Sigmoid colon (tissue), 7 donors: ENCODE measurements at regions of chr6 and their contacts with region 1.

Region 1: GRCh38 chr6:26025894-26026832 is 61.1 kb upstream of the HFE start:
- DNase-seq: peak; percentile 99
- H3K4me3 ChIP-seq: peak overlapping the region; percentile 53 to 76 (median 61)
- H3K27ac ChIP-seq: peak overlapping the region; percentile 90 to 99 (median 95)
- H3K4me1 ChIP-seq: peaks cover 0 to 31% (median 19%) of the 10 kb centered on the region in 4 donors
- H3K27me3 ChIP-seq: no peaks in the 10 kb centered on the region
- CTCF ChIP-seq: peak in 3 of 4 experiments; percentile 75 to 93 (median 77)
- EP300 ChIP-seq: peak in 2 of 4 donors; percentile 62 to 73
- POLR2A ChIP-seq: peak; percentile 46 to 53

Region 2: DNA sequence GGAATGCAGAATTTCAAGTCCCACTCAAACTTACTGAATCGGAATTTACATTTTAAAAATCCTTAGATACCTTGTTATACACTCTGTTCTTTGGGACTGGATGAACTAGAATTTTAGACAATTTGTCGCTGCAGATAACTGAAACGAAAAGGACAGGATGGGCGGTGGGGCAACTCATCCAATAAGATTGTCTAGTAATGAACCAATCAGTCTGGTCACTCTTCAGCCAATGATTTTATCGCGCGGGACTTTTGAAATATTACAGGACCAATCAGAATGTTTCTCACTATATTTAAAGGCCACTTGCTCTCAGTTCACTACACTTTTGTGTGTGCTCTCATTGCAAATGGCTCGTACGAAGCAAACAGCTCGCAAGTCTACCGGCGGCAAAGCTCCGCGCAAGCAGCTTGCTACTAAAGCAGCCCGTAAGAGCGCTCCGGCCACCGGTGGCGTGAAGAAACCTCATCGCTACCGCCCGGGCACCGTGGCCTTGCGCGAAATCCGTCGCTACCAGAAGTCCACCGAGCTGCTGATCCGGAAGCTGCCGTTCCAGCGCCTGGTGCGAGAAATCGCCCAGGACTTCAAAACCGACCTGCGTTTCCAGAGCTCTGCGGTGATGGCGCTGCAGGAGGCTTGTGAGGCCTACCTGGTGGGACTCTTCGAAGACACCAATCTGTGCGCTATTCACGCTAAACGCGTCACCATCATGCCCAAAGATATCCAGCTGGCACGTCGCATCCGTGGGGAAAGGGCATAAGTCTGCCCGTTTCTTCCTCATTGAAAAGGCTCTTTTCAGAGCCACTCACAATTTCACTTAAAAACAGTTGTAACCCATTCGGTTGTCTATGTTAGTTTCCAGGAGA is 19.1 kb after region 1 on chr6:
- intact Hi-C with region 1: loop called (anchors 2 kb)
- DNase-seq: peak; percentile 94
- H3K4me3 ChIP-seq: peak overlapping the region; percentile 41 to 56 (median 54)
- H3K27ac ChIP-seq: peak overlapping the region; percentile 94 to 98 (median 98)
- H3K4me1 ChIP-seq: peaks cover 0 to 20% (median 15%) of the 10 kb centered on the region in 4 donors
- H3K27me3 ChIP-seq: no peaks in the 10 kb centered on the region
- CTCF ChIP-seq: no peak
- EP300 ChIP-seq: no peak
- POLR2A ChIP-seq: peak; percentile 91 to 93

Region 3: DNA sequence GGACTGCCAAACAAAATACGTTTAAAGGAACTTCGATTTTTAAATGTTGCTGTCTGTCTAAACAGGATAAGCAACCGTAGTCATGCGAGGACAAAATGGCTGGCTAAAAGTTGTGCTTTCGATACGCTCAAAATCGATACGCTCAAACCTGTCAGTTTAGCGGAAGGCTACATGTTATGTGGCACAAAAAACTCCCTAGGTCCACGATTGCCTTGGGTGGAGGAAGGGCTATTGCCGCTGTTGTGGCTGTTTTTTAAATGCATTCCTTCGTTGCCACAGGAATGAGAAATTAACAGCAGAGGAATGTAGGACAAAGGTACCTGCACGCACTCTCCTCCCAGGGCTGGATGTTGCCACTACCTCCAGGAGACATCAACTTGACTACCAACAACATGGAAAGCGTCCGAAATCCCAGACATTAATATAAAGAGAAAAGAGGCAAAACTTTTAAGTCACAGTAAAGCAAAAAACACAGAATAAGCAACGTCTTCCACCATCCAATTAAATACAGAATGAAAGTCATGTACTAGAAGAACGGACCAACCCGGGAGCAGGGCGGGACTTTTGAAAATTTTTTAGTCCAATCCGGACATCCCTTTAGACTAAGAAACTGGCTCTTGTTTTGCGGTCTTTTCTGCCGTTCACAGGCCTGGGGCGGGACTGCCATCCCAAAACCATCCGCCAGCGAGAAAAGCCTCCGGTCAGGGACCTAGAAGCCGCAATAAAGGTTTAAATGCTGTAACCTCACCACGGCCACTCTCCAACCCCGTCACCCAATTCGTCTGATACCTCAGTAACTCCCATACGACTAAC is 28.9 kb after region 1 on chr6:
- intact Hi-C with region 1: loop called (anchors 1 kb)
- DNase-seq: peak; percentile 97
- H3K4me3 ChIP-seq: peak overlapping the region; percentile 59 to 83 (median 78)
- H3K27ac ChIP-seq: peak overlapping the region; percentile 88 to 99 (median 97)
- H3K4me1 ChIP-seq: peaks cover 2 to 15% (median 7%) of the 10 kb centered on the region in 4 donors
- H3K27me3 ChIP-seq: no peaks in the 10 kb centered on the region
- CTCF ChIP-seq: peak in 3 of 4 experiments; percentile 12 to 39 (median 34)
- EP300 ChIP-seq: no peak
- POLR2A ChIP-seq: peak; percentile 72 to 74

Region 4: DNA sequence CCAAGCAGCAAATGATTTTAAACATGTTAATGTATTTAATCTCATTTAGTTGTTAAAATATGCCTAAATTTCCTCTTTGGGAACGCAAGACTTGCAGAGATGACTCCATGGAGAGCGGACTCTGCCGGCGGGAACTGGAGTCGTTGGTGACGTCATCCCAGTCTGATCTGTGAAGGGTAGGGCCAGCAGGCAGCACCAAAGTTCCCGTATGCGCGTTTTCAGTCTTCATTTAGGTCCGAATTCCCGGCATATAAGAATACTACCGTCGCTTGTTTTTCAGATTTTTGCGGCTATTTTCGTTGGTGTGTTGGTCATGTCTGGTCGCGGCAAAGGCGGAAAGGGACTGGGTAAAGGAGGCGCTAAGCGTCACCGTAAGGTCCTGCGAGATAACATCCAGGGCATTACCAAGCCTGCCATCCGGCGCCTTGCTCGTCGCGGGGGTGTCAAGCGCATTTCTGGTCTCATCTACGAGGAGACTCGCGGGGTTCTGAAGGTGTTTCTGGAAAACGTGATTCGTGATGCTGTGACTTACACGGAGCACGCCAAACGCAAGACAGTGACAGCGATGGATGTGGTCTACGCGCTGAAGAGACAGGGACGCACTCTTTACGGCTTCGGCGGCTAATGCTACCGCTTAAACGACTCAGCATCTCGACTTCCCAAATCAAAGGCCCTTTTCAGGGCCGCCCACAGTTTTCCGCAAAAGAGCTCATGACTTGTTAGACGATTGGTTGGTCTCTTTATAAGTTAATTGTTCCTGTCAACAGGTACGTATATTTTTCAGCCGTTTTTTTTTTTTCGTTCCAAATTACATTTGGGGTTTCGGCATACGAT is 178.4 kb after region 1 on chr6:
- intact Hi-C with region 1: loop called (anchors 5 kb)
- DNase-seq: peak; percentile 99
- H3K4me3 ChIP-seq: peak overlapping the region; percentile 61 to 75 (median 65)
- H3K27ac ChIP-seq: peak overlapping the region; percentile 95 to 98 (median 98)
- H3K4me1 ChIP-seq: peaks cover 0 to 29% (median 16%) of the 10 kb centered on the region in 4 donors
- H3K27me3 ChIP-seq: no peaks in the 10 kb centered on the region
- CTCF ChIP-seq: peak in 2 of 4 experiments; percentile 8 to 34
- EP300 ChIP-seq: peak in 3 of 4 donors; percentile 67 to 81 (median 81)
- POLR2A ChIP-seq: peak; percentile 99

Region 5: GRCh38 chr6:26216356-26216885 is 190.3 kb after region 1 on chr6:
- intact Hi-C with region 1: loop called (anchors 5 kb)
- DNase-seq: peak; percentile 93
- H3K4me3 ChIP-seq: peak overlapping the region; percentile 46 to 59 (median 50)
- H3K27ac ChIP-seq: peak overlapping the region; percentile 88 to 97 (median 94)
- H3K4me1 ChIP-seq: peaks cover 0 to 26% (median 23%) of the 10 kb centered on the region in 4 donors
- H3K27me3 ChIP-seq: no peaks in the 10 kb centered on the region
- CTCF ChIP-seq: no peak
- EP300 ChIP-seq: peak in 2 of 4 donors; percentile 41 to 86
- POLR2A ChIP-seq: peak; percentile 97 to 99

Region 6: DNA sequence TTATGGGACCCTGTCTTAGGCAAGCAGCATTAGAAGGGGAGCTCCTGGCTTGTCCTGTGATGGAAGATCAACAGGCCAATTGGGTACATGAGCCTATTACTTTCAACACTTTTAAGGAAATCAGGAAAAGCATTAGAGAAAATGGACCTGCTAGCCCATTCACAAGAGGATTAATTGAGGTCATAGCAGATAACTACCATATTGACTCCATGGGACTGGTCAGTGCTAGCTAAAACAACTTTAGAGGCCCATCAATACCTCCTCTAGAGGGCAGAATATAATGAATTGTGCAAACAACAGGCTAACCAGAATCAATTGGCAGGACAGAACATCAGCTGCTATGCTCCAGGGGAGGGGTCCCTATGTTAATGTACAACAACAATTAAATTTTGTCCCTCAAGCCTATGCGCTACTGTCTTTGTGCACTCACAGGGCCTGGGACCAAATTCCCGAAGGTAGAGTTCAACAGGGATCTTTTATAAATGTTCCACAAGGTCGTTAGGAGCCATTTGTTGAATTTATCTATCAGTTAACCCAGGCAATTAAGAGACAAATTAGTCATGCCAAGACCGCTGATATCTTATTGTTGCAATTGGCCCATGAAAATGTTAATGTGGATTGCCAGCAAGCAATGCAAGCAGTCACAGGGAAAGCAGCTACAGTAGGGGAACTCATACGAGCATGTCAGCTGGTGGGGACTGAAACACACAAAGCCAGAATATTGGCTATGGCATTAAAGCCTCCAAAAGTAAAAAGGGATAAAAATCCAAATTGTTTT is 232.2 kb after region 1 on chr6:
- intact Hi-C with region 1: no loop called
- DNase-seq: no peak
- H3K4me3 ChIP-seq: no peak overlapping the region
- H3K27ac ChIP-seq: no peak overlapping the region
- H3K4me1 ChIP-seq: no peaks in the 10 kb centered on the region
- H3K27me3 ChIP-seq: peaks cover 0 to 30% (median 0%) of the 10 kb centered on the region in 3 donors
- CTCF ChIP-seq: no peak
- EP300 ChIP-seq: no peak
- POLR2A ChIP-seq: no peak

Region 7: DNA sequence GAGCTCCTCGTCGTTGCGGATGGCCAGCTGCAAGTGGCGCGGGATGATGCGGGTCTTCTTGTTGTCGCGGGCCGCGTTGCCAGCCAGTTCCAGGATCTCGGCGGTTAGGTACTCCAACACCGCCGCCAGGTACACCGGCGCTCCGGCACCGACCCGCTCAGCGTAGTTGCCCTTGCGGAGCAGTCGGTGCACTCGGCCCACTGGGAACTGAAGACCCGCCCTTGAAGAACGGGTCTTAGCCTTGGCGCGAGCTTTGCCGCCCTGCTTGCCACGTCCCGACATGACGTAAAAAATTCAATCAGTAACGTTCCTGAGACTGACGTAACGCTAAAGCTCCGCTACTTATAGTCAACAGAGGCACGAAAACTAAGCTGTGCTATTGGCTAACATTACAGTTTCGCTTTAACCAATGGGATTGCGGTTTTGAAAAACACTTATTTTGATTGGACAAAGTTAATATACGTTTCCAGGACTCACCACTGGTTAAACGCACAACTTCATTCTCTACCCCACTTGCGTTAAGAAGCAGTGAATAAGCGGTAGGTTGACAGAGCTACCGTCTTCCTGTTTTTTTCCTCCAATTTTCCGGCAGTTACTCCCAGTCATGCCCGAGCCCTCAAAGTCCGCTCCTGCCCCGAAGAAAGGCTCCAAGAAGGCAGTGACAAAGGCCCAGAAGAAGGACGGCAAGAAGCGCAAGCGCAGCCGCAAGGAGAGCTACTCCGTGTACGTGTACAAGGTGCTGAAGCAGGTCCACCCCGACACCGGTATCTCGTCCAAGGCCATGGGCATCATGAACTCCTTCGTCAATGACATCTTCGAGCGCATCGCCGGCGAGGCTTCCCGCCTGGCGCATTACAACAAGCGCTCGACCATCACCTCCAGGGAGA is 1812.1 kb after region 1 on chr6:
- intact Hi-C with region 1: loop called (anchors 10 kb)
- DNase-seq: peak; percentile 88
- H3K4me3 ChIP-seq: peak overlapping the region; percentile 48 to 75 (median 65)
- H3K27ac ChIP-seq: peak overlapping the region; percentile 87 to 97 (median 94)
- H3K4me1 ChIP-seq: peaks cover 0 to 37% (median 17%) of the 10 kb centered on the region in 4 donors
- H3K27me3 ChIP-seq: peaks cover 0 to 24% (median 18%) of the 10 kb centered on the region in 3 donors
- CTCF ChIP-seq: peak in 2 of 4 experiments; percentile 12 to 18
- EP300 ChIP-seq: no peak
- POLR2A ChIP-seq: peak; percentile 80 to 92